Naive thymus-derived CD4-positive, alpha-beta T cell (primary cell): ENCODE measurements at regions of chr5 and their contacts with region 1.

Region 1: DNA sequence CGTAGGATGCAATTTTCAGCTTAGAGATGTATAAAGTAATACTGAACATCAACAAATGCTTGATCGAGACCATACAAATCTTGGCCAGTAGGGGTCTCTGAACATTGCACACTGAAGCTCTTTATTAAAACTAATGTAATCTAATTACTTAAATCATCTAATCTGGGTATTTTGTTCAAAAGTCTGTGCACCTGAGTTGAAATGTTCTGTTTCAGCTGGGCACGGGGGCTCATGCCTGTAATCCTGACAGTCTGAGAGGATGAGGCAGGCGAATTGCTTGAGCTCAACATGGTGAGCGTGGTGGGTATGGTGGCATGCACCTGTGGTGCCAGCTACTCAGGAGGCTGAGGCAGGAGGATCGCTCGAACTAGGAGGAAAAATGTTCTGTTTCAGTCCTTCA is 41.0 kb downstream of the ESM1 start:
- DNase-seq: peak in 7 of 9 donors; percentile 18 to 61 (median 51)
- ATAC-seq: peak; percentile 63
- H3K4me3 ChIP-seq: no peak overlapping the region
- H3K4me3 Mint-ChIP-seq: no peak overlapping the region
- H3K27ac ChIP-seq: no peak overlapping the region
- H3K27ac Mint-ChIP-seq: no peak overlapping the region
- H3K4me1 ChIP-seq: no peaks in the 10 kb centered on the region
- H3K4me1 Mint-ChIP-seq: peaks cover 0 to 32% (median 0%) of the 10 kb centered on the region in 7 donors
- H3K27me3 ChIP-seq: no peaks in the 10 kb centered on the region
- H3K27me3 Mint-ChIP-seq: peaks cover 0 to 18% (median 0%) of the 10 kb centered on the region in 5 donors

Region 2: DNA sequence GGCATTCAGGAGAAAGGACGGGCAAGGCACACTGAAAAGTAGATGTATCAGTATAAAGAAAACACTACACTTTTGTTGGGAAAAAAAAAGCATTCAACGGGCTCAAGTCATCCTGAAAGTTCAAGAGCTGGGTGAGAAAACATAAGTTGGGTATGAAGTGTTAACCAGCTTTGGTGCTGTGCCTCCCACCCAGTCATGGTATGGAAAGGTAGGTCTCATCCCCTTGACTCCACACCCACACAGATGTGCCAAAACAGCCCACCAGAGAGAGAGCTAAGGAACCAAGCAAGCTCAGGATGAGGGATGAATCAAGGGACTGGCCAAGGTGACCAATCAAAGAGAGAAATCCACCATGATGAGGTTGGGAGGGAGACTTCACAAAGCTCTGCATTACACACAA is 13.6 kb before region 1 on chr5:
- CTCF ChIA-PET with region 1: interaction called, 17 read pairs
- POLR2A ChIA-PET with region 1: no interaction called
- intact Hi-C with region 1: no loop called
- DNase-seq: no peak
- ATAC-seq: no peak
- H3K4me3 ChIP-seq: no peak overlapping the region
- H3K4me3 Mint-ChIP-seq: no peak overlapping the region
- H3K27ac ChIP-seq: no peak overlapping the region
- H3K27ac Mint-ChIP-seq: no peak overlapping the region
- H3K4me1 ChIP-seq: no peaks in the 10 kb centered on the region
- H3K4me1 Mint-ChIP-seq: peaks cover 0 to 11% (median 0%) of the 10 kb centered on the region in 7 donors
- H3K27me3 ChIP-seq: no peaks in the 10 kb centered on the region
- H3K27me3 Mint-ChIP-seq: peaks cover 8 to 28% (median 12%) of the 10 kb centered on the region in 5 donors

Region 3: DNA sequence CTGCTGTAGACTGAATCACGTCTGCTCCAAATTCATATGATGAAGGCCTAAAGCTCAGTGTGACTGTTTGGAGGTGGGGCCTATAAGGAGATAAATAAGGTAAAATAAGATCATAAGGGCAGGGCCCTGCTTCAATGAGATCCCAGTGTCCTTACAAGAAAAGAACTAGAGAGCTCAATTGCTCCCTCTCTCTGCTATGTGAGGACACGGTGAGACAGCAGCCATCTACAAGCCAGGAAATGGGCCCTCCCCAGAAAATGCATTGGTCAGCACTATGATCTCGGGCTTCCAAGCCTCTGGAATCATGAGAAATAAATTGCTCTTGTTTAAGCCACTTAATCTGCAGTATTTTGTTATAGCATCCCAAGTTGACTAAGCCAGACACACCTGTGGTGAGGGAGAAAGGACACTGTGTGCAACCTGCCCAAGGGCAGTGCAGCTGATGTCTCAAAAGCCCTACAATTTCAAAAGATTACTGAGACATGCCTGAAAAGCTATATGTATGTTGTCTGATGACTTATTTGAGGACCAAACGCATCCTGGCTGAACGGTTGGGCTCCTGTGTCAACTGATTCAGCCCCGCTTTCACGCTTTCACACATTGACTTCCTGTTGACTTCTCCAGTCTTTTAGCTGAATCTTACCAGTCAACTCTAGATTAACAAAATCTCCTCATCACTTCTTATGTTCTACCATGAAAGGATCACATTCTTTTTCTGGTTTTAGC is 92.8 kb after region 1 on chr5:
- CTCF ChIA-PET with region 1: interaction called, 9 read pairs
- POLR2A ChIA-PET with region 1: no interaction called
- intact Hi-C with region 1: loop called (anchors 1 to 5 kb)
- DNase-seq: peak in 8 of 9 donors; percentile 10 to 69 (median 50)
- ATAC-seq: peak; percentile 89
- H3K4me3 ChIP-seq: no peak overlapping the region
- H3K4me3 Mint-ChIP-seq: peak overlapping the region; percentile 6 to 55 (median 48)
- H3K27ac ChIP-seq: peak overlapping the region; percentile 49
- H3K27ac Mint-ChIP-seq: peak overlapping the region; percentile 55 to 99 (median 86)
- H3K4me1 ChIP-seq: peaks cover 17 to 31% of the 10 kb centered on the region in 2 donors
- H3K4me1 Mint-ChIP-seq: peaks cover 11 to 53% (median 32%) of the 10 kb centered on the region in 7 donors
- H3K27me3 ChIP-seq: no peaks in the 10 kb centered on the region
- H3K27me3 Mint-ChIP-seq: no peaks in the 10 kb centered on the region

Region 4: GRCh38 chr5:55096861-55097260 is 152.5 kb after region 1 on chr5:
- CTCF ChIA-PET with region 1: interaction called, 13 read pairs
- POLR2A ChIA-PET with region 1: interaction called, 6 read pairs
- intact Hi-C with region 1: loop called (anchors 1 kb)
- DNase-seq: peak in 7 of 9 donors; percentile 61 to 83 (median 74)
- ATAC-seq: peak; percentile 85
- H3K4me3 ChIP-seq: peak overlapping the region; percentile 33
- H3K4me3 Mint-ChIP-seq: peak overlapping the region; percentile 16 to 79 (median 70)
- H3K27ac ChIP-seq: peak overlapping the region; percentile 59
- H3K27ac Mint-ChIP-seq: peak overlapping the region; percentile 88 to 100 (median 94)
- H3K4me1 ChIP-seq: peaks cover 42 to 52% of the 10 kb centered on the region in 2 donors
- H3K4me1 Mint-ChIP-seq: peaks cover 50 to 95% (median 90%) of the 10 kb centered on the region in 7 donors
- H3K27me3 ChIP-seq: no peaks in the 10 kb centered on the region
- H3K27me3 Mint-ChIP-seq: no peaks in the 10 kb centered on the region

Region 5: GRCh38 chr5:55159763-55160492 is 215.6 kb after region 1 on chr5 and contains the start of gene GPX8:
- CTCF ChIA-PET with region 1: interaction called, 41 read pairs
- POLR2A ChIA-PET with region 1: no interaction called
- intact Hi-C with region 1: loop called in 1 of 2 experiments (anchors 1 kb)
- DNase-seq: peak in 7 of 9 donors; percentile 27 to 65 (median 54)
- ATAC-seq: peak; percentile 75
- H3K4me3 ChIP-seq: no peak within 1 kb of the TSS
- H3K4me3 Mint-ChIP-seq: no peak within 1 kb of the TSS
- H3K27ac ChIP-seq: no peak within 1 kb of the TSS
- H3K27ac Mint-ChIP-seq: no peak within 1 kb of the TSS
- H3K4me1 ChIP-seq: no peaks in the 10 kb centered on the region
- H3K4me1 Mint-ChIP-seq: peaks cover 0 to 9% (median 0%) of the 10 kb centered on the region in 7 donors
- H3K27me3 ChIP-seq: no peaks in the 10 kb centered on the region
- H3K27me3 Mint-ChIP-seq: peaks cover 6 to 75% (median 29%) of the 10 kb centered on the region in 5 donors
- total RNA-seq, gene GPX8: not detected

Region 6: DNA sequence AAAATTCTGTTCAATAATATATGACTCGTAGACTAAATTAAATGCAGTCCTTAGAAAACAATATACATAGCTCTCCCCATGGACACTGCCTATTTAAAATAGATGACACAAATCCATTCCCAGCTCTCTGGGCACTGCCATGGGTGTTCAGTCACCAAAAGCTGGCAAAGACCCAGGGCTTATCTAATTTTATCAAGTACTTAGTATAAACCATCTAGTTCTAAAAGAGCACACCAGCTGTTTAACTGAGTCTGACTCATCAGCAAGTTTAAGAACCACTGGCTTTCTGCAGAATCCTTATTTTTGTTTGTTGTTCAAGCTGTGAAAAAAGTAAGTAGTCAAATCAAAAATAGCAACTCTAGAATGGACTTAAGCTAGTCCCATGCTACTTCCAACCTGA is 482.8 kb after region 1 on chr5:
- CTCF ChIA-PET with region 1: no interaction called
- POLR2A ChIA-PET with region 1: no interaction called
- intact Hi-C with region 1: no loop called
- DNase-seq: no peak
- ATAC-seq: no peak
- H3K4me3 ChIP-seq: no peak overlapping the region
- H3K4me3 Mint-ChIP-seq: no peak overlapping the region
- H3K27ac ChIP-seq: no peak overlapping the region
- H3K27ac Mint-ChIP-seq: peak overlapping the region in 1 of 9 donors; percentile 19
- H3K4me1 ChIP-seq: no peaks in the 10 kb centered on the region
- H3K4me1 Mint-ChIP-seq: peaks cover 0 to 6% (median 0%) of the 10 kb centered on the region in 7 donors
- H3K27me3 ChIP-seq: no peaks in the 10 kb centered on the region
- H3K27me3 Mint-ChIP-seq: no peaks in the 10 kb centered on the region